ENCODE measurements at regions of chr6 and their contacts with region 1.

Region 1: GRCh38 chr6:43496370-43497128 is 13.6 kb downstream of the LRRC73 start:
- DNase-seq: no peak
- ATAC-seq: peak in 1 of 2 donors; percentile 7
- H3K4me3 ChIP-seq: no peak overlapping the region
- H3K27ac ChIP-seq: peak overlapping the region in 1 of 4 donors; percentile 70
- H3K4me1 ChIP-seq: peaks cover 14 to 31% of the 10 kb centered on the region in 2 donors
- H3K27me3 ChIP-seq: no peaks in the 10 kb centered on the region
- CTCF ChIP-seq: peak; percentile 46 to 74 (median 63)
- POLR2A ChIP-seq: no peak

Region 2: GRCh38 chr6:43477235-43478007 is 19.1 kb before region 1 on chr6 and contains the start of gene TJAP1:
- in situ Hi-C with region 1: no loop called
- intact Hi-C with region 1: loop called (anchors 1 kb)
- DNase-seq: peak; percentile 79 to 84
- ATAC-seq: peak; percentile 87 to 93
- H3K4me3 ChIP-seq: peak within 1 kb of the TSS; percentile 80 to 95 (median 87)
- H3K27ac ChIP-seq: peak within 1 kb of the TSS; percentile 86 to 93 (median 92)
- H3K4me1 ChIP-seq: peaks cover 38 to 40% of the 10 kb centered on the region in 2 donors
- H3K27me3 ChIP-seq: no peaks in the 10 kb centered on the region
- CTCF ChIP-seq: no peak
- POLR2A ChIP-seq: peak; percentile 75 to 85
- total RNA-seq, gene TJAP1: 28.8 to 45.2 (median 37.7) TPM

Measured in gastrocnemius medialis (tissue), 4 donors.